Right ventricle myocardium superior (tissue), 1 donor: ENCODE measurements at regions of chr1 and their contacts with region 1.

Region 1: DNA sequence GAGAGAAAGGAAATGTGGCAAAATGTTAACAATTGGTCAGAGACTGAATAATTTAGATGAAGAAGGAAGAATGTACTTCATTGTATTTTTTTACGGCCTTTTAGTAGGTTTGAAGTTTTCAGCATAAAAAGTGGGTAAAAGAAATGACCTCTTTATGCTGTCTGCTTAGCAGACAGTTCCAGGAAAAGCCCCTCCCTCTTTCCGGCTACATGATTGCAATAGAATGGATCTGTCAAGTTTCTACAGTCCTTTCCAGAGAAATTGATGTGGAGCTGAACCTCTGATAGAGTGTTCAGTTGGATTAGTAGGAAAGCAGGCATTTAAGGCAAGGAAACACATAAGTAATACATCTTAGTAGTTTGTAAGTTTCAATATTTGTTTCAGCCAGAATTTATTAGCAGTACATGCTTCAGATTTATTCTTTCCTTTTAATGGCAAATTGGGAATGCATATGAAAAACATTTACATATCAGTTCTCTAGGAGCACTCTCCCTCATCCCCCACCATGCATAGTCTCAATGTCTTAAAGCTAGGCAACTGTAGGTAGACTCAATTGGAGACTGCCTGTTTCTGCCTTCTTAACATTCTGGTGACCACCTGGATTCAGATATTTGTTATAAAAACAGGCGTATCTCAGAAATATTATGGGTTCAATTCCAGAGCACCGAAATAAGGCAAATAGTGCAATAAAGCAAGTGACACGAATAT is 36.4 kb downstream of the HS2ST1 start:
- DNase-seq: no peak
- ATAC-seq: no peak

Region 2: DNA sequence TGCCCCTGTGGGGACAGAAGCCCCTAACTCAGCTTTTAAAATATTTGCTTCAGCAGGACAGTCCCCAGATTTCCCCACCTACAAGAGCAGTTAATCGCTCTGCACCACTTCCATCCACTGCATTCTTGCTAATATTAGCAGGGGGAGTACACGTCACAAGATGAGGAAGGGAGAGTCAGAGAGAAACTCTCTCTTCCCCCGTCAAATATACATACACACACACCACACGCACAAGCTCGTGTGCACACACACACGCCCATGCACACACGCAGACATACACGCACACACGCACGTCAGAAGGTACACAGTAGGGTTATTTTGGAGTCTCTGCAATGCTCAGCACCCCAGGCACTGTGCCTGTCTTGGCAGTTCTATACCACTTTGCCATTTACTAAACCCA is 480.0 kb before region 1 on chr1:
- intact Hi-C with region 1: no loop called
- DNase-seq: no peak
- ATAC-seq: no peak

Region 3: DNA sequence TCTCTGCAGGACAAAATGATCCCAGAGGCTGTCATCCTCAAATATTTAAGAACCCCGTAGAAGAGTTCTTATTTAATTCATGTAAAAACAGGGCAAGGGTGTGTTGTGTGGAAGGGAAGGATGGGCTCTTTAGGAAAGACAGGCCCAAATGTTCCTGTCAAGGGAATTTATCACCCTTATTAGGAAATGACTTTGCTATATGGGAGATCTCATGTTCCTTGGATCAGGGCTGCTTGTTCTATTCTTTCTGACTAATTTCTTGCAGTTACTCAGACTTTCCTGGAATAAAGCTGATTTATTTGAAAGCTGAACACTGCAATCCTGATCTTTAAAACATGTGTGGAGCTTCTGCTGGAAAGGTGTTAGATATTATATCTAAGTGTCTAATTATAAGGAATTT is 109.8 kb before region 1 on chr1:
- intact Hi-C with region 1: loop called (anchors 5 kb)
- DNase-seq: no peak
- ATAC-seq: no peak